ENCODE measurements at regions of chr11 and their contacts with region 1.

Region 1: GRCh38 chr11:117107701-117108590 is 9.7 kb upstream of the SIK3 start:
- DNase-seq: no peak
- ATAC-seq: no peak
- H3K4me3 ChIP-seq: no peak overlapping the region
- H3K27ac ChIP-seq: no peak overlapping the region
- H3K4me1 ChIP-seq: 0 out of 4 replicates have a peak, but pooled peaks cover 0 to 2% of the 10 kb centered on the region in 2 experiments
- H3K27me3 ChIP-seq: no peaks in the 10 kb centered on the region
- CTCF ChIP-seq: no peak
- POLR2A ChIP-seq: no peak
- RAD21 ChIP-seq: no peak

Region 2: DNA sequence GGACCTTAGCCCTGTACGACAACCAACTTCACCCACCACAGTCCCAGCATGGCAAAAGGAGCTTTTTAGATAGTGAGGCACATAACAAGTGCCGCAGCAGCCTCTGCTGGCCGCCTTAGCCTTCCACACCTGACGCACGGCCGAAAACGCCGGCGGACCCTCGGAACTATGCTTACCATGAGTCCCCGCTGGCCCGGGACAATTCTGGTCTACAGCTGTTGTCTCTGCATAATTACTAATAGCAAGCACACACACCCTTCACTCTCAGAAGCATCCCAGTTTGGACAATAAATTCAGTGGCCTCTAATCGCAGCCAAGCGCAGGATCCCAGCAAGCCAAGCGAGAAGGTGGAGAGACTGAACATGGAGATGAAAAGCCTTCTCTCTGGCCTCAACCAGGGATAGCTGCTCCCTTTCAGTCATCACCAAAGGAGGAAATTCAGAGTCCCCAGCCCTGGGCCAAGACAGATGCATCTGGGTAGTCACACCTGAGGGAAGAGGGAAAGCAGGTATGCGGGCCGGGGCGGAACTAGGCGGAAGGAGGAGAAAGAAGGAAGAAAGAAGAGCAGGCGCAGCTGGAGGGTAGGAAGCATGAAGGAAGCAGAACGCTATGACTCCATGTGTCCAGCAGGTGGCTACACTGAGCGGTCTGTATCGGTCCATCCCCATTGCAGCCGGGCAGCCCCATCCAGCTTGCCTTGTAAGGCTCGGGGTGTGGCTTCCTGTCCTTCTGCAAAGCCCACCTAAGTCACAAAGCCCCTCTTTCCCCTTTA is 375.5 kb before region 1 on chr11:
- CTCF ChIA-PET with region 1: interaction called, 13 read pairs
- POLR2A ChIA-PET with region 1: no interaction called
- RAD21 ChIA-PET with region 1: no interaction called
- intact Hi-C with region 1: loop called (anchors 1 kb)
- DNase-seq: peak; percentile 45
- ATAC-seq: peak; percentile 94
- H3K4me3 ChIP-seq: no peak overlapping the region
- H3K27ac ChIP-seq: no peak overlapping the region
- H3K4me1 ChIP-seq: peaks cover 0 to 4% of the 10 kb centered on the region in 2 experiments; a peak in 1 of 4 replicates
- H3K27me3 ChIP-seq: no peaks in the 10 kb centered on the region
- CTCF ChIP-seq: peak; percentile 64 to 90 (median 73); a peak in 5 of 6 replicates
- POLR2A ChIP-seq: no peak
- RAD21 ChIP-seq: peak; percentile 60

Region 3: GRCh38 chr11:116787786-116788486 is 320.0 kb before region 1 on chr11 and contains the start of gene ZPR1:
- CTCF ChIA-PET with region 1: interaction called, 37 read pairs
- POLR2A ChIA-PET with region 1: no interaction called
- RAD21 ChIA-PET with region 1: interaction called in 1 of 2 experiments, 5 read pairs
- intact Hi-C with region 1: loop called (anchors 1 kb)
- DNase-seq: peak; percentile 56
- ATAC-seq: peak; percentile 80
- H3K4me3 ChIP-seq: peak within 1 kb of the TSS; percentile 93 to 94
- H3K27ac ChIP-seq: peak within 1 kb of the TSS; percentile 43; the same call in 1 of the 2 replicates
- H3K4me1 ChIP-seq: peaks cover 12 to 29% of the 10 kb centered on the region in 2 experiments
- H3K27me3 ChIP-seq: no peaks in the 10 kb centered on the region
- CTCF ChIP-seq: no peak
- POLR2A ChIP-seq: no peak
- RAD21 ChIP-seq: no peak
- total RNA-seq, gene ZPR1: 56.3 TPM

Region 4: GRCh38 chr11:116879800-116880625 is 227.9 kb before region 1 on chr11:
- CTCF ChIA-PET with region 1: interaction called, 34 read pairs
- POLR2A ChIA-PET with region 1: no interaction called
- RAD21 ChIA-PET with region 1: interaction called, 3 to 4 read pairs
- intact Hi-C with region 1: loop called (anchors 1 kb)
- DNase-seq: peak; percentile 51
- ATAC-seq: peak; percentile 95
- H3K4me3 ChIP-seq: no peak overlapping the region
- H3K27ac ChIP-seq: no peak overlapping the region
- H3K4me1 ChIP-seq: peaks cover 0 to 5% of the 10 kb centered on the region in 2 experiments; a peak in 1 of 4 replicates
- H3K27me3 ChIP-seq: no peaks in the 10 kb centered on the region
- CTCF ChIP-seq: peak; percentile 74 to 77 (median 75); a peak in 5 of 6 replicates
- POLR2A ChIP-seq: no peak
- RAD21 ChIP-seq: peak; percentile 86

Measured in HCT116 (cell line).